Naive thymus-derived CD4-positive, alpha-beta T cell (primary cell): ENCODE measurements at regions of chr20 and their contacts with region 1.

Region 1: GRCh38 chr20:478949-479429 is 16.7 kb upstream of the TBC1D20 start:
- DNase-seq: peak in 7 of 9 donors; percentile 45 to 75 (median 68)
- ATAC-seq: peak; percentile 84
- H3K4me3 ChIP-seq: no peak overlapping the region
- H3K4me3 Mint-ChIP-seq: no peak overlapping the region
- H3K27ac ChIP-seq: no peak overlapping the region
- H3K27ac Mint-ChIP-seq: peak overlapping the region in 7 of 9 donors; percentile 27 to 82 (median 56)
- H3K4me1 ChIP-seq: peaks cover 0 to 6% of the 10 kb centered on the region in 2 donors
- H3K4me1 Mint-ChIP-seq: peaks cover 8 to 27% (median 24%) of the 10 kb centered on the region in 7 donors
- H3K27me3 ChIP-seq: no peaks in the 10 kb centered on the region
- H3K27me3 Mint-ChIP-seq: no peaks in the 10 kb centered on the region

Region 2: GRCh38 chr20:381581-382290 is 97.3 kb before region 1 on chr20:
- CTCF ChIA-PET with region 1: no interaction called
- POLR2A ChIA-PET with region 1: interaction called, 3 read pairs
- intact Hi-C with region 1: loop called in 1 of 2 experiments (anchors 1 kb)
- DNase-seq: peak; percentile 41 to 75 (median 64)
- ATAC-seq: peak; percentile 81
- H3K4me3 ChIP-seq: peak overlapping the region; percentile 64
- H3K4me3 Mint-ChIP-seq: peak overlapping the region; percentile 66 to 91 (median 84)
- H3K27ac ChIP-seq: peak overlapping the region; percentile 73
- H3K27ac Mint-ChIP-seq: peak overlapping the region; percentile 55 to 86 (median 78)
- H3K4me1 ChIP-seq: no peaks in the 10 kb centered on the region
- H3K4me1 Mint-ChIP-seq: peaks cover 4 to 34% (median 13%) of the 10 kb centered on the region in 7 donors
- H3K27me3 ChIP-seq: no peaks in the 10 kb centered on the region
- H3K27me3 Mint-ChIP-seq: peaks cover 0 to 3% (median 0%) of the 10 kb centered on the region in 5 donors

Region 3: GRCh38 chr20:431012-431904 is 47.7 kb before region 1 on chr20:
- CTCF ChIA-PET with region 1: interaction called, 3 read pairs
- POLR2A ChIA-PET with region 1: no interaction called
- intact Hi-C with region 1: loop called (anchors 1 kb)
- DNase-seq: peak in 7 of 9 donors; percentile 25 to 47 (median 29)
- ATAC-seq: peak; percentile 65
- H3K4me3 ChIP-seq: no peak overlapping the region
- H3K4me3 Mint-ChIP-seq: no peak overlapping the region
- H3K27ac ChIP-seq: no peak overlapping the region
- H3K27ac Mint-ChIP-seq: peak overlapping the region in 7 of 9 donors; percentile 17 to 88 (median 72)
- H3K4me1 ChIP-seq: peaks cover 17 to 21% of the 10 kb centered on the region in 2 donors
- H3K4me1 Mint-ChIP-seq: peaks cover 27 to 57% (median 45%) of the 10 kb centered on the region in 7 donors
- H3K27me3 ChIP-seq: no peaks in the 10 kb centered on the region
- H3K27me3 Mint-ChIP-seq: no peaks in the 10 kb centered on the region

Region 4: GRCh38 chr20:438571-439469 is 40.2 kb before region 1 on chr20:
- CTCF ChIA-PET with region 1: interaction called, 5 read pairs
- POLR2A ChIA-PET with region 1: no interaction called
- intact Hi-C with region 1: loop called (anchors 1 to 2 kb)
- DNase-seq: peak; percentile 29 to 72 (median 60)
- ATAC-seq: peak; percentile 91
- H3K4me3 ChIP-seq: peak overlapping the region; percentile 45
- H3K4me3 Mint-ChIP-seq: peak overlapping the region; percentile 76 to 97 (median 82)
- H3K27ac ChIP-seq: peak overlapping the region; percentile 39
- H3K27ac Mint-ChIP-seq: peak overlapping the region; percentile 10 to 90 (median 79)
- H3K4me1 ChIP-seq: peaks cover 38 to 42% of the 10 kb centered on the region in 2 donors
- H3K4me1 Mint-ChIP-seq: peaks cover 51 to 72% (median 68%) of the 10 kb centered on the region in 7 donors
- H3K27me3 ChIP-seq: no peaks in the 10 kb centered on the region
- H3K27me3 Mint-ChIP-seq: no peaks in the 10 kb centered on the region

Region 5: GRCh38 chr20:621125-621756 is 142.3 kb after region 1 on chr20:
- CTCF ChIA-PET with region 1: no interaction called
- POLR2A ChIA-PET with region 1: no interaction called
- intact Hi-C with region 1: no loop called
- DNase-seq: no peak
- ATAC-seq: no peak
- H3K4me3 ChIP-seq: no peak overlapping the region
- H3K4me3 Mint-ChIP-seq: no peak overlapping the region
- H3K27ac ChIP-seq: no peak overlapping the region
- H3K27ac Mint-ChIP-seq: no peak overlapping the region
- H3K4me1 ChIP-seq: no peaks in the 10 kb centered on the region
- H3K4me1 Mint-ChIP-seq: no peaks in the 10 kb centered on the region
- H3K27me3 ChIP-seq: no peaks in the 10 kb centered on the region
- H3K27me3 Mint-ChIP-seq: peaks cover 28 to 61% (median 55%) of the 10 kb centered on the region in 5 donors

Region 6: GRCh38 chr20:768426-768978 is 289.5 kb after region 1 on chr20 and contains the start of gene SLC52A3:
- CTCF ChIA-PET with region 1: no interaction called
- POLR2A ChIA-PET with region 1: no interaction called
- intact Hi-C with region 1: no loop called
- DNase-seq: no peak
- ATAC-seq: no peak
- H3K4me3 ChIP-seq: no peak within 1 kb of the TSS
- H3K4me3 Mint-ChIP-seq: no peak within 1 kb of the TSS
- H3K27ac ChIP-seq: no peak within 1 kb of the TSS
- H3K27ac Mint-ChIP-seq: no peak within 1 kb of the TSS
- H3K4me1 ChIP-seq: no peaks in the 10 kb centered on the region
- H3K4me1 Mint-ChIP-seq: peaks cover 0 to 3% (median 0%) of the 10 kb centered on the region in 7 donors
- H3K27me3 ChIP-seq: no peaks in the 10 kb centered on the region
- H3K27me3 Mint-ChIP-seq: peaks cover 3 to 22% (median 10%) of the 10 kb centered on the region in 5 donors
- total RNA-seq, gene SLC52A3: not detected